ENCODE measurements at regions of chr4 and their contacts with region 1.

Region 1: DNA sequence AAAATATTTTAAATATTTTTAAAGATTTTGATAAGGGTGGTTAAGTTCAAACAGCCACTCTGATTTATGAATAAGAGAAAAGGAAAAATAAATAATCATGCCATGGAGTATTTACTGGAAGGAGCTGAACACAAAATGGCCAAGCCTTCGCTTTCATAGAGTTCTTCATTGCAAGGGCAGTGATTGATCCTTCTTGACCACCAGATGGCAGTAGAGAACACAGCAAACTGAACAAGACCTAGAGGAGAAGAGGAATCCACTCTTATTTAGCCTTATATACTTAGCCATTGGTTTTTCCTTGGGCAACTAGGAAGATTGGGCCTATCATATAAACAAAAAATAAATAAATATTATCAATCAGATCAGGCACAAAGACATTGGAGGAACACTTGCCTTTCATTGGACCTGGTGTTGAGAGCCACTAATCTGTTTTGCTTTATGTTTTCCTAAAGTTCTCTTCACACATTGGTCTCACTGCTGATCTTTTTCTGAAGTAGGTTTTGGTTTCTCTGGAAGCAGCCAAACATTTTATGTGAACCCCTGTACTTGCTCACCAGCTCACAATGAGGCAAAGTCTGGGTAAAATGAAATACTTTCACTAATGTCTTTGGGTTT is 58.1 kb upstream of the PARM1 start:
- DNase-seq: no peak
- H3K4me3 ChIP-seq: no peak overlapping the region
- H3K27ac ChIP-seq: no peak overlapping the region
- H3K4me1 ChIP-seq: peaks cover 0 to 20% (median 16%) of the 10 kb centered on the region in 4 donors
- H3K27me3 ChIP-seq: no peaks in the 10 kb centered on the region
- CTCF ChIP-seq: peak; percentile 41 to 88 (median 64)
- EP300 ChIP-seq: no peak
- POLR2A ChIP-seq: no peak

Region 2: DNA sequence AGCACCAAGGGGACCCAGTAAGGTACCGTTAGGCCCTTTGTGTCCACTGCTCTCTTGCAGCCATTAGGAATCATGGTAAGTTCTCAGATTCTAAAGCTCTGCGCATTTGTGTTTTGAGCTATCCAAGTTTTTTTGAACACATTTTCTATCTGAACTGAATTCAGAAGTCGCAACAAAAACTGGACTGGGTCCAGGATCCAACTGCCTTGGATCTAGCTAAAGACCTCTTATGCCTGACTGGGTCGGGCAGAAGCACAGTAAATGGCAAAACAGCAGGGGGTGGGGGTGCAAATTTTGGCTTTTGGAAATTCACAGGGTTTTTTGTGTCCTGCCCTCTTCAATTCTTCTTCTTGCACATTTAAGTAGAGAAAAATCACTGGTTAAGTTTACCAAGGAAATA is 609.3 kb after region 1 on chr4:
- intact Hi-C with region 1: loop called (anchors 10 kb)
- DNase-seq: no peak
- H3K4me3 ChIP-seq: no peak overlapping the region
- H3K27ac ChIP-seq: no peak overlapping the region
- H3K4me1 ChIP-seq: no peaks in the 10 kb centered on the region
- H3K27me3 ChIP-seq: no peaks in the 10 kb centered on the region
- CTCF ChIP-seq: no peak
- EP300 ChIP-seq: no peak
- POLR2A ChIP-seq: no peak